Transverse colon (tissue), 4 donors: ENCODE measurements at regions of chr11 and their contacts with region 1.

Region 1: GRCh38 chr11:91104237-91104636 is 881.4 kb upstream of the CHORDC1 start:
- DNase-seq: no peak
- H3K4me3 ChIP-seq: no peak overlapping the region
- H3K27ac ChIP-seq: no peak overlapping the region
- H3K4me1 ChIP-seq: no peaks in the 10 kb centered on the region
- H3K27me3 ChIP-seq: no peaks in the 10 kb centered on the region
- CTCF ChIP-seq: no peak
- EP300 ChIP-seq: no peak
- POLR2A ChIP-seq: no peak

Region 2: GRCh38 chr11:91023731-91024130 is 80.5 kb before region 1 on chr11:
- in situ Hi-C with region 1: loop called in 1 of 4 experiments (anchors 25 kb)
- intact Hi-C with region 1: no loop called
- DNase-seq: no peak
- H3K4me3 ChIP-seq: no peak overlapping the region
- H3K27ac ChIP-seq: no peak overlapping the region
- H3K4me1 ChIP-seq: no peaks in the 10 kb centered on the region
- H3K27me3 ChIP-seq: no peaks in the 10 kb centered on the region
- CTCF ChIP-seq: no peak
- EP300 ChIP-seq: no peak
- POLR2A ChIP-seq: no peak

Region 3: DNA sequence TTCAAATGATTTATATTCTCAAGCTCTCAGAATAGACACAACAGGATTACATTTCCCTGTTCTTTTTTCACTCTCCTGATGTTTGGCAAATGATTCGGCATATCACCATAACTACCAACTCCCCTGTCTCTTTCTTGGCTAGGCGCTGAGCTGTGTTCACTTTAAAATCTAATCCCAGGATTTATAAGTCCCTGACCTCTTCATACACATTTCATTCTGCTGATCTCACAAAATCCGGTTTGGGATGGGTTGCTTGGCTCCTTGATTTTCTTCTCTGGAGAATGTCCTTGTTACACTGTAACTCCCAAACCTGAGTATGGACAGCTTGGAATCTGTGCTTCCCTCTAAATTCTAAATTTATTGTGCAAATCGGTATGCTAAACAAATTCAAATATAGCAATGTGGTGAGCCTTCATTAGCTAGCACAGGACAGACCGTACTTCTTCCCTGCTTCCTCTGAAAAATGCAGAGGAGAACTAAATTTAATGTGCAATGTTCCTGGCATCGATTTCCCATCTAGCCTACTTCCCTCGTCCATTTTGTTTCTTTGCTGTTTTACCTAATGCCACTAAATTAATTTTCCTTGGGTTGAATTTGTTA is 261.8 kb after region 1 on chr11:
- in situ Hi-C with region 1: no loop called
- intact Hi-C with region 1: no loop called
- DNase-seq: no peak
- H3K4me3 ChIP-seq: no peak overlapping the region
- H3K27ac ChIP-seq: no peak overlapping the region
- H3K4me1 ChIP-seq: no peaks in the 10 kb centered on the region
- H3K27me3 ChIP-seq: no peaks in the 10 kb centered on the region
- CTCF ChIP-seq: no peak
- EP300 ChIP-seq: no peak
- POLR2A ChIP-seq: no peak